ENCODE measurements at regions of chr6 and their contacts with region 1.

Region 1: GRCh38 chr6:150079604-150080003 is 10.7 kb upstream of the ULBP3 start:
- DNase-seq: peak; percentile 49
- ATAC-seq: peak; percentile 70
- H3K4me3 Mint-ChIP-seq: no peak overlapping the region
- H3K27ac Mint-ChIP-seq: no peak overlapping the region
- H3K4me1 Mint-ChIP-seq: peaks cover 20% of the 10 kb centered on the region
- H3K27me3 Mint-ChIP-seq: peaks cover 16% of the 10 kb centered on the region
- CTCF ChIP-seq: no peak

Region 2: GRCh38 chr6:149990618-149991471 is 88.8 kb before region 1 on chr6:
- CTCF ChIA-PET with region 1: no interaction called
- POLR2A ChIA-PET with region 1: no interaction called
- intact Hi-C with region 1: no loop called
- DNase-seq: peak; percentile 49
- ATAC-seq: peak; percentile 52
- H3K4me3 Mint-ChIP-seq: peak overlapping the region; percentile 67
- H3K27ac Mint-ChIP-seq: no peak overlapping the region
- H3K4me1 Mint-ChIP-seq: peaks cover 24% of the 10 kb centered on the region
- H3K27me3 Mint-ChIP-seq: peaks cover 77% of the 10 kb centered on the region
- CTCF ChIP-seq: no peak

Region 3: GRCh38 chr6:150334790-150335783 is 255.5 kb after region 1 on chr6:
- CTCF ChIA-PET with region 1: interaction called, 24 read pairs
- POLR2A ChIA-PET with region 1: no interaction called
- intact Hi-C with region 1: loop called (anchors 2 kb)
- DNase-seq: peak; percentile 56
- ATAC-seq: peak; percentile 42
- H3K4me3 Mint-ChIP-seq: no peak overlapping the region
- H3K27ac Mint-ChIP-seq: no peak overlapping the region
- H3K4me1 Mint-ChIP-seq: no peaks in the 10 kb centered on the region
- H3K27me3 Mint-ChIP-seq: peaks cover 9% of the 10 kb centered on the region
- CTCF ChIP-seq: peak; percentile 85